ENCODE measurements at regions of chr2 and their contacts with region 1.

Region 1: GRCh38 chr2:65129826-65130663 is at the start of gene RAB1A:
- DNase-seq: peak; percentile 91
- ATAC-seq: peak; percentile 93
- H3K4me3 Mint-ChIP-seq: peak within 1 kb of the TSS; percentile 100
- H3K27ac Mint-ChIP-seq: peak within 1 kb of the TSS; percentile 100
- H3K4me1 Mint-ChIP-seq: peaks cover 49% of the 10 kb centered on the region
- H3K27me3 Mint-ChIP-seq: no peaks in the 10 kb centered on the region
- CTCF ChIP-seq: no peak
- total RNA-seq, gene RAB1A: 45.0 and 46.4 TPM in 2 replicates

Region 2: GRCh38 chr2:65056215-65057053 is 73.6 kb before region 1 on chr2 and contains the start of gene CEP68:
- CTCF ChIA-PET with region 1: interaction called, 3 read pairs
- POLR2A ChIA-PET with region 1: interaction called, 50 read pairs
- intact Hi-C with region 1: loop called (anchors 1 kb)
- DNase-seq: peak; percentile 95
- ATAC-seq: peak; percentile 91
- H3K4me3 Mint-ChIP-seq: peak within 1 kb of the TSS; percentile 97
- H3K27ac Mint-ChIP-seq: peak within 1 kb of the TSS; percentile 95
- H3K4me1 Mint-ChIP-seq: peaks cover 75% of the 10 kb centered on the region
- H3K27me3 Mint-ChIP-seq: no peaks in the 10 kb centered on the region
- CTCF ChIP-seq: no peak
- total RNA-seq, gene CEP68: 16.6 and 17.9 TPM in 2 replicates

Region 3: DNA sequence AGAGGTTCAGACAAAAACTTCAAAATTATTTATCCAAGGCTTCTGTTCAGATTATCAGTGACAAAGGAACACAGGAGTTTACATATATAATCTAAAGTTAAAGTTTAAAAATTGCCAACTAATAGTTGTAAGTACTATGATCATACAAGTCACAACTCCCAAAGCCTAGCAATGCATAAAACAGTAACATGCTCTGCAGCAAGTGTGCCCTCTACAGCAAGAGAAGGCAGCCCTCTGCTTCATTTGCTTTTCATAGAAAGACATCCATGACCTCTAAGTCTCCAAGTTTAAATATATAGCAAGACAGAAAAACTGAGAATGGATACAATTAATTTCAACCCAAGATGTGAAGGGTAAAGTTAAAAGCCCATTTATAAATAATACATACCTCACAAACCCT is 13.4 kb before region 1 on chr2:
- CTCF ChIA-PET with region 1: no interaction called
- POLR2A ChIA-PET with region 1: interaction called, 16 read pairs
- intact Hi-C with region 1: loop called (anchors 2 kb)
- DNase-seq: no peak
- ATAC-seq: no peak
- H3K4me3 Mint-ChIP-seq: no peak overlapping the region
- H3K27ac Mint-ChIP-seq: no peak overlapping the region
- H3K4me1 Mint-ChIP-seq: peaks cover 70% of the 10 kb centered on the region
- H3K27me3 Mint-ChIP-seq: no peaks in the 10 kb centered on the region
- CTCF ChIP-seq: no peak

Region 4: GRCh38 chr2:65164426-65164891 is 34.4 kb after region 1 on chr2:
- CTCF ChIA-PET with region 1: interaction called, 3 read pairs
- POLR2A ChIA-PET with region 1: interaction called, 4 read pairs
- intact Hi-C with region 1: loop called (anchors 1 kb)
- DNase-seq: no peak
- ATAC-seq: no peak
- H3K4me3 Mint-ChIP-seq: no peak overlapping the region
- H3K27ac Mint-ChIP-seq: no peak overlapping the region
- H3K4me1 Mint-ChIP-seq: peaks cover 34% of the 10 kb centered on the region
- H3K27me3 Mint-ChIP-seq: no peaks in the 10 kb centered on the region
- CTCF ChIP-seq: no peak

Measured in activated B cell treated with CpG ODN at 0.5 μM for 24 hours (primary cell).